ENCODE measurements at regions of chr6 and their contacts with region 1.

Region 1: DNA sequence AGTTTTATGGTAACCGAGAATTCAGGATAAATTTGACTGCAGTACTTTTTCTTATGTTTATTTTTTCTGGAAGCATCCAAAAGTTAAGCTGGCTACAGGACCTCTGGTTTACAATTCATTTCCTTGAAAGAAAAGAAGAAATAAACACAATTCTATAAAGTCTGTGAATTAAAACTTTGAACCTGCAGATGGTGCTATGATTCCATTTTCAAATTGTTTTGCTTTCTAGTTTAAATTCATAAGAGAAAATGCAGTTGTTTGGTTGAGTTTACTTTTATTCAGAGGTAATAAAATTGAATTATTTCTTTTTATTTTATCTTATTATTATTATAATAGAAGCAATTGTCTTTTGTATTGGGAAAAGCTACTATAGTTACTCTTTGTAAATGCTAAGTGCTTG is 1.8 kb upstream of the VIP start:
- DNase-seq: no peak
- H3K4me3 Mint-ChIP-seq: no peak overlapping the region
- H3K27ac Mint-ChIP-seq: no peak overlapping the region
- H3K4me1 Mint-ChIP-seq: no peaks in the 10 kb centered on the region
- H3K27me3 Mint-ChIP-seq: no peaks in the 10 kb centered on the region
- CTCF ChIP-seq: no peak

Region 2: GRCh38 chr6:152595505-152595904 is 153.3 kb before region 1 on chr6:
- CTCF ChIA-PET with region 1: no interaction called
- intact Hi-C with region 1: no loop called
- DNase-seq: no peak
- H3K4me3 Mint-ChIP-seq: no peak overlapping the region
- H3K27ac Mint-ChIP-seq: no peak overlapping the region
- H3K4me1 Mint-ChIP-seq: peaks cover 15% of the 10 kb centered on the region
- H3K27me3 Mint-ChIP-seq: peaks cover 12% of the 10 kb centered on the region
- CTCF ChIP-seq: no peak

Region 3: DNA sequence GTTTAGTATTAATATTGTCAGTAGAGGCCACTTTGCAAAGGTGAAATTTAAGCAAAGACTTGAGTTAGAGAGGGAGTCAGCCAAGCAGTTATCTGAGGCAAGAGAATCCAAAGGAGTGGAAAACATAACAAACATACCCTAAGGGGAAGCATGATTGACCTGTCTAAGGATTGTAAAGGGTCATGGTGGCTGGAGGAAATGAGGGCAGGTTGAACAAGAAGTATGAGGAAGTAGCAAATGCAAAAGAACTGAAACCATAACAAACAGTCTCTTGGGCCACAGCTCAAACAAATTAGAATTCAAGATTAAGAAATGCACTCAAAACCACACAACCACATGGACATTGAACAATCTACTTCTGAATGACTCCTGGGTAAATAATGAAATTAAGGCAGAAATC is 130.8 kb after region 1 on chr6:
- CTCF ChIA-PET with region 1: no interaction called
- intact Hi-C with region 1: no loop called
- DNase-seq: no peak
- H3K4me3 Mint-ChIP-seq: no peak overlapping the region
- H3K27ac Mint-ChIP-seq: no peak overlapping the region
- H3K4me1 Mint-ChIP-seq: peaks cover 9% of the 10 kb centered on the region
- H3K27me3 Mint-ChIP-seq: peaks cover 29% of the 10 kb centered on the region
- CTCF ChIP-seq: no peak

Region 4: DNA sequence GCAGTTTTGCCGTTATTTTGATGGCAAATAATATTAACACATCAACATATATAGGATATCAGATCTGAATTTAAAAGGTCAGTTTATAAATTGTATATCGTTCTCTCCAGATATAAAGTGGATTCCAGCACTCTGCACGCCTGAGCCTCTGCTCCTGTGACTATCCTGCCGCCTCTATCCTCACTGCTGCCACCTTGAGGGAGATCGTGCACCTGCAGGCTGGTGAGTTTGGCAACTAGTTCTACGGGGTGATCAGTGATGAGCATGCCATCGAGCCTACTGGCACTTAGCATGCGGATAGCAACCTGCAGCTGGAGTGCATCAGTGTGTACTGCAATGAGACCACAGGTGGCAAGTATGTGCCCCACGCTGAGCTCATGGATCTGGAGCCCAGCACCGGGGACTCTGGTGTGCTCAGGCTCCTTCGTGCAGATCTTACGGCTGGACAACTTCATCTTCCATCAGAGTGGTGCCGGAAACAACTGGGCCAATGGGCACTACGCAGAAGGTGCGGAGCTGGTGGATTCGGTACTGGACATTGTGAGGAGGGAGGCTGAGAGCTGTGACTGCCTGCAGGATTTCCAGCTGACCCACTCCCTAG is 149.1 kb after region 1 on chr6:
- CTCF ChIA-PET with region 1: no interaction called
- intact Hi-C with region 1: loop called (anchors 5 kb)
- DNase-seq: peak; percentile 75
- H3K4me3 Mint-ChIP-seq: no peak overlapping the region
- H3K27ac Mint-ChIP-seq: no peak overlapping the region
- H3K4me1 Mint-ChIP-seq: no peaks in the 10 kb centered on the region
- H3K27me3 Mint-ChIP-seq: peaks cover 13% of the 10 kb centered on the region
- CTCF ChIP-seq: peak; percentile 51

Region 5: GRCh38 chr6:152948150-152948768 is 199.4 kb after region 1 on chr6:
- CTCF ChIA-PET with region 1: interaction called, 4 read pairs
- intact Hi-C with region 1: loop called (anchors 1 kb)
- DNase-seq: peak; percentile 6
- H3K4me3 Mint-ChIP-seq: no peak overlapping the region
- H3K27ac Mint-ChIP-seq: no peak overlapping the region
- H3K4me1 Mint-ChIP-seq: peaks cover 7% of the 10 kb centered on the region
- H3K27me3 Mint-ChIP-seq: no peaks in the 10 kb centered on the region
- CTCF ChIP-seq: peak; percentile 51

Region 6: DNA sequence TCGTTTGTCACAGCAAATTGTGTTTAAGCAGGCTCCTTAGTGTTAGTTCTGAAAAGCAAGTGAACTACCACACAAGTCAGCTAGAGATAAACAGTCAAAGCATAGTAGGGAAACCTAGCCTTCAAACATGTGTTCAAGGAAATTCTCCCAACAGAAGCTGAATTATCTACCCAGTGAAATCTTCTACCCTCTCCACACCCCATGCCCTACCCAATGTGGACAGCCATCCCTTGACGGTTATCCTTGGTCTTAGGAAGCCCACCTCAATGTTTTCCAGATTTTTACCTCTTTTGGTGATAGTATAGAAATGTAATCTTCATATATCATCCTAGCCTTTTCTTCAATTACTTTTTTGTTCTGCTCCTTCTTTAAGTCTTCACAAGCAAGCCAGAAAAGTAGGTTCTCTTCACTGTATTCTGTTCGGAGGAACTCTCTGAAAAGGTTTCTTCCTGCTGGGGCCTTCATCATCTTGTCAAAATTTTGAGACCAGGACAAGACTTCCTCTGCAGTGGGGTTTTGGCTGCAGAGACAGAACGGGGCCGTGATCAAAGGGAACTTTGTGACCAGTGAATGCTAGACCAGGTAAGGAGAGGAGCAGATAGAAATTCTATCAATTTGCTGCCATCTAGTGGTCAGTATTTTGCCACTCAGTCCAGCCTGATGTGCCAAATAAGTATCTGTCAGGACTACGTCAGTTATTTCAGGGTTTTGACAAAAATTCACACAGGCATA is 275.3 kb after region 1 on chr6:
- CTCF ChIA-PET with region 1: no interaction called
- intact Hi-C with region 1: loop called (anchors 5 kb)
- DNase-seq: peak; percentile 36
- H3K4me3 Mint-ChIP-seq: no peak overlapping the region
- H3K27ac Mint-ChIP-seq: no peak overlapping the region
- H3K4me1 Mint-ChIP-seq: no peaks in the 10 kb centered on the region
- H3K27me3 Mint-ChIP-seq: no peaks in the 10 kb centered on the region
- CTCF ChIP-seq: peak; percentile 37

Region 7: GRCh38 chr6:153044295-153044694 is 295.5 kb after region 1 on chr6:
- CTCF ChIA-PET with region 1: no interaction called
- intact Hi-C with region 1: no loop called
- DNase-seq: no peak
- H3K4me3 Mint-ChIP-seq: no peak overlapping the region
- H3K27ac Mint-ChIP-seq: no peak overlapping the region
- H3K4me1 Mint-ChIP-seq: no peaks in the 10 kb centered on the region
- H3K27me3 Mint-ChIP-seq: no peaks in the 10 kb centered on the region
- CTCF ChIP-seq: no peak

Region 8: GRCh38 chr6:153150752-153151440 is 402.1 kb after region 1 on chr6:
- CTCF ChIA-PET with region 1: no interaction called
- intact Hi-C with region 1: no loop called
- DNase-seq: no peak
- H3K4me3 Mint-ChIP-seq: peak overlapping the region; percentile 57
- H3K27ac Mint-ChIP-seq: no peak overlapping the region
- H3K4me1 Mint-ChIP-seq: no peaks in the 10 kb centered on the region
- H3K27me3 Mint-ChIP-seq: no peaks in the 10 kb centered on the region
- CTCF ChIP-seq: no peak

Measured in Calu3 (cell line).